Panc1 (cell line): ENCODE measurements at regions of chr11 and their contacts with region 1.

Region 1: GRCh38 chr11:727859-728748 is 19.2 kb upstream of the TALDO1 start:
- DNase-seq: no peak
- ATAC-seq: peak; percentile 89
- H3K4me3 ChIP-seq: peak overlapping the region in 1 of 2 experiments; percentile 23; a peak in 1 of 4 replicates
- H3K27ac ChIP-seq: peak overlapping the region; percentile 74
- H3K4me1 ChIP-seq: peaks cover 39% of the 10 kb centered on the region
- H3K27me3 ChIP-seq: no peaks in the 10 kb centered on the region
- CTCF ChIP-seq: peak; percentile 100

Region 2: DNA sequence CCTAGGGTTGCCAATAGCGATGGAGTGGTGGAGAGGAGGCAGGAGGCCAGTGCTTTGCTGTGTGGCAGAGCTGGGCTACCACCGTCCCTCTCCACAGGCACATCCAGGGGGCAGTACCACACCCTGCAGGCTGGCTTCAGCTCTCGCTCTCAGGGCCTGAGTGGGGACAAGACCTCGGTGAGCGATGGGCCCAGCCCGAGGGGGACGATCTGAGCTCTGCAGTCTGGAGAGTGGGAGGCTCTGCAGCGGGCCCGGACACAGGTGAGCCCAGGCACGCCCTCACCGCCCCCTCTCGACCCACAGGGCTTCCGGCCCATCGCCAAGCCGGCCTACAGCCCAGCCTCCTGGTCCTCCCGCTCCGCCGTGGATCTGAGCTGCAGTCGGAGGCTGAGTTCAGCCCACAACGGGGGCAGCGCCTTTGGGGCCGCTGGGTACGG is 331.6 kb before region 1 on chr11:
- CTCF ChIA-PET with region 1: no interaction called
- POLR2A ChIA-PET with region 1: no interaction called
- in situ Hi-C with region 1: no loop called
- intact Hi-C with region 1: no loop called
- DNase-seq: no peak
- ATAC-seq: peak; percentile 68
- H3K4me3 ChIP-seq: no peak overlapping the region; a peak in 1 of 4 replicates
- H3K27ac ChIP-seq: no peak overlapping the region; the same call in 1 of the 2 replicates
- H3K4me1 ChIP-seq: peaks cover 49% of the 10 kb centered on the region
- H3K27me3 ChIP-seq: no peaks in the 10 kb centered on the region
- CTCF ChIP-seq: peak; percentile 76

Region 3: GRCh38 chr11:554824-555472 is 173.2 kb before region 1 on chr11:
- CTCF ChIA-PET with region 1: interaction called, 3 read pairs
- POLR2A ChIA-PET with region 1: no interaction called
- in situ Hi-C with region 1: no loop called
- intact Hi-C with region 1: loop called (anchors 10 kb)
- DNase-seq: no peak
- ATAC-seq: peak; percentile 68
- H3K4me3 ChIP-seq: peak overlapping the region; percentile 57 to 59
- H3K27ac ChIP-seq: peak overlapping the region; percentile 66
- H3K4me1 ChIP-seq: peaks cover 26% of the 10 kb centered on the region
- H3K27me3 ChIP-seq: no peaks in the 10 kb centered on the region
- CTCF ChIP-seq: no peak; the same call in 1 of the 2 replicates

Region 4: GRCh38 chr11:662689-663274 is 65.3 kb before region 1 on chr11:
- CTCF ChIA-PET with region 1: no interaction called
- POLR2A ChIA-PET with region 1: no interaction called
- in situ Hi-C with region 1: no loop called
- intact Hi-C with region 1: loop called (anchors 5 kb)
- DNase-seq: peak; percentile 33
- ATAC-seq: peak; percentile 93
- H3K4me3 ChIP-seq: no peak overlapping the region
- H3K27ac ChIP-seq: no peak overlapping the region
- H3K4me1 ChIP-seq: no peaks in the 10 kb centered on the region
- H3K27me3 ChIP-seq: no peaks in the 10 kb centered on the region
- CTCF ChIP-seq: no peak; the same call in 1 of the 2 replicates

Region 5: GRCh38 chr11:695538-696248 is 32.4 kb before region 1 on chr11 and contains the start of gene TMEM80:
- CTCF ChIA-PET with region 1: interaction called, 12 read pairs
- POLR2A ChIA-PET with region 1: interaction called, 12 read pairs
- in situ Hi-C with region 1: no loop called
- intact Hi-C with region 1: loop called (anchors 1 kb)
- DNase-seq: peak; percentile 88
- ATAC-seq: peak; percentile 86
- H3K4me3 ChIP-seq: peak within 1 kb of the TSS; percentile 75 to 78
- H3K27ac ChIP-seq: peak within 1 kb of the TSS; percentile 96
- H3K4me1 ChIP-seq: peaks cover 55% of the 10 kb centered on the region
- H3K27me3 ChIP-seq: no peaks in the 10 kb centered on the region
- CTCF ChIP-seq: no peak
- total RNA-seq, gene TMEM80: 45.2 TPM

Region 6: GRCh38 chr11:702788-703538 is 25.1 kb before region 1 on chr11:
- CTCF ChIA-PET with region 1: interaction called, 6 read pairs
- POLR2A ChIA-PET with region 1: interaction called, 15 read pairs
- in situ Hi-C with region 1: no loop called
- intact Hi-C with region 1: no loop called
- DNase-seq: no peak
- ATAC-seq: peak; percentile 43
- H3K4me3 ChIP-seq: no peak overlapping the region
- H3K27ac ChIP-seq: peak overlapping the region; percentile 79
- H3K4me1 ChIP-seq: peaks cover 58% of the 10 kb centered on the region
- H3K27me3 ChIP-seq: no peaks in the 10 kb centered on the region
- CTCF ChIP-seq: no peak

Region 7: DNA sequence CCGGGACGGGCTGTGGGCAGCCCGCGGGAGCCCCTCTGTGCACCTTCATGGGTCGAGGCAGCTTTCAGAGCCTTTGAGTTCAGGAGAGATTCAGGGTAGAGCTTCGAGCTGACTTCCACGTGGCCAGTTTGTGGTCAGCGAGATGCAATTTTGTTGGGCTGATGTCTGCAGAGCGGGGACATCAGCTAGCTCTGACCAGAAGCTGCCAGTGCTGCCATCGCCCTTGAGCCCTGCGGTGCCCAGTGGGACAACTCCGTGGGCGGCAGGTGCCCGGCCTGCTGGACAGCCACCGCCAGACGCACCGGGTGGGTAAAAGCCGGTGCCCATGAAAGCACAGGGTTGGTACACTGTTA is 19.9 kb after region 1 on chr11:
- CTCF ChIA-PET with region 1: interaction called, 12 read pairs
- POLR2A ChIA-PET with region 1: interaction called, 5 read pairs
- in situ Hi-C with region 1: no loop called
- intact Hi-C with region 1: no loop called
- DNase-seq: no peak
- ATAC-seq: peak; percentile 19
- H3K4me3 ChIP-seq: peak overlapping the region; percentile 83 to 87
- H3K27ac ChIP-seq: peak overlapping the region; percentile 85
- H3K4me1 ChIP-seq: peaks cover 20% of the 10 kb centered on the region
- H3K27me3 ChIP-seq: no peaks in the 10 kb centered on the region
- CTCF ChIP-seq: no peak